AG04449 (cell line): ENCODE measurements at regions of chr4 and their contacts with region 1.

Region 1: DNA sequence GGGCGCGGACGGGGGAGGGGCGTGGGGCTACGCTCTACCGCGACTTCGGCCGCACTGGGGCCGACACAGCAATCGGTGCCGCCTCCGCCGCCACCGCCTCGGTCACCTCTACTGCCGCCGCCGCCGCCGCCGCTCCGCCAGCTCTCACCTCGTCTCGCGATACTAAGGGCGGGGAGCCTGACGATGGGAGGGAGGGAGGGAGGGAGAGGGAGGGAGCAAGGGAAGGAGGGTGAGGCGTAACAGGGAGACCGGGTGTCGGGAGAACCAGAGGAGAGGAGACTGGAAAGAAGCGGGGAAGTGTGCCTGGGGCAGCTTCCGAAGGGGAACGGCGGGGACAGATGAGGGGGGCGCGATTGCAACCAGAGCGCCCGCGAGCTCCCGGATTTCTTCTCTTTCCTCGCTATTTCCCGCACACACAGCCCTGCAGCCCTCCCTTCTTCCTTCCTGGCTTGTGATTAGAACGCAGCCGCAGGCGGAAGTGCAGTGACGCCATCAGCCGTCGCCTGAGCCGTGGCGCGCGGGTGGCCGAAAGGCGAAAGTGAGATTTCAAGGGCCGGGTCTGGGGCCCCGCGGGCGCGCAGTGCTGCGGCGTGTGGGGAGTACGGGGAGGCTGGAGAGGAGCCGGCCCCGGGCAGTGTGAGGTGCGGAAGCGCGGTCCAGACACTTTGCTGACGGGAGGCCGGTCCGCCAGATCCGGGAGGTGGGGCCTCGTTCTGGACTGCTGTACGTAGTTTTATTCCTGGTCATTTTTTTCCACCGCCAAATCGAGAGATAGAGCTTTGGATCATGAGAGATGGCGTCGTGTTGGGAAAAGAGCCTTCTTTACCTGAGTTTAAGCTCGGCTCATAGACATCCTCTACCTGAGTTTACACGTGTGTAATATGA is at the start of gene ANKRD17:
- DNase-seq: peak; percentile 53
- H3K4me3 ChIP-seq: peak within 1 kb of the TSS; percentile 70
- CTCF ChIP-seq: peak; percentile 19

Region 2: GRCh38 chr4:73069338-73070073 is 189.4 kb before region 1 on chr4 and contains the start of gene COX18:
- CTCF ChIA-PET with region 1: interaction called, 14 read pairs
- POLR2A ChIA-PET with region 1: interaction called, 3 read pairs
- DNase-seq: peak; percentile 93
- H3K4me3 ChIP-seq: peak within 1 kb of the TSS; percentile 76
- CTCF ChIP-seq: no peak

Region 3: GRCh38 chr4:73127839-73128453 is 131.0 kb before region 1 on chr4:
- CTCF ChIA-PET with region 1: interaction called, 34 read pairs
- POLR2A ChIA-PET with region 1: no interaction called
- DNase-seq: no peak
- H3K4me3 ChIP-seq: no peak overlapping the region
- CTCF ChIP-seq: no peak

Region 4: GRCh38 chr4:73245955-73246354 is 13.0 kb before region 1 on chr4:
- CTCF ChIA-PET with region 1: interaction called, 15 read pairs
- POLR2A ChIA-PET with region 1: interaction called, 3 read pairs
- DNase-seq: no peak
- H3K4me3 ChIP-seq: no peak overlapping the region
- CTCF ChIP-seq: no peak

Region 5: GRCh38 chr4:73308286-73308685 is 49.4 kb after region 1 on chr4:
- CTCF ChIA-PET with region 1: interaction called, 11 read pairs
- POLR2A ChIA-PET with region 1: interaction called, 3 read pairs
- DNase-seq: no peak
- H3K4me3 ChIP-seq: no peak overlapping the region
- CTCF ChIP-seq: peak; percentile 38